PC-9 (cell line): ENCODE measurements at regions of chr15 and their contacts with region 1.

Region 1: DNA sequence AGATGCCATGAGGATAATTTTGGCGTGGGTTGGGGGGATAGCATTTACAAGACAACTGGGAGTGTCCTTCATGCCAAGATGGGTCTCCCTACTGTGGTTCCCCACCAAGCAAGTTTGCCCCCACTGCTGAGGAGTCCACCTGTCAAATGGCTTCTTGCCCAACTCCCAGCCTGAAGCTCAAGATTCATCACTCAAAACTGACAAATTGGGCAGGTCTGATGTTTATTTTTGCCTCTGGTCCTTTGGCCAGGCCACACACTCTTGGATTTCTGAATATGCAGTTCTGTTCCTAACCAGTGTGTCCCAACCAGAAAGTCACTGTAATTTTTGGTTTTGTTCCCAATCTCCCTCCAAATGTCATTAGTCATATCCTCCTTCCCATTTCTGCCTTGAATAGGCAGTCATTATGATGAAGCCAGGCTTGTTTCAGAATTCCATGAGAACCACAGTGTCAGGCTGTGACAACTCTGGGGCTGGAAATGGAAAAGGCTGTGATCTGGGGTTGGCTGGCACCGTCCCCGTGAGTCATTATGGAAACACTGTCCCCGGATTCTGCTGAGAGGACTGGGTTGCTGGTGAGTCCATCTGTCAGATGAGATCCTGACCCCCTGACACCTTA is 29.3 kb upstream of the MEF2A start:
- DNase-seq: peak; percentile 42 to 55
- H3K4me3 ChIP-seq: no peak overlapping the region
- H3K27ac ChIP-seq: peak overlapping the region; percentile 33
- H3K4me1 ChIP-seq: peaks cover 18% of the 10 kb centered on the region
- H3K27me3 ChIP-seq: no peaks in the 10 kb centered on the region
- CTCF ChIP-seq: no peak

Region 2: GRCh38 chr15:97745465-97746071 is 1791.0 kb before region 1 on chr15:
- CTCF ChIA-PET with region 1: interaction called, 10 read pairs
- POLR2A ChIA-PET with region 1: no interaction called
- intact Hi-C with region 1: no loop called
- DNase-seq: peak in 1 of 2 experiments; percentile 4
- H3K4me3 ChIP-seq: no peak overlapping the region
- H3K27ac ChIP-seq: no peak overlapping the region
- H3K4me1 ChIP-seq: no peaks in the 10 kb centered on the region
- H3K27me3 ChIP-seq: peaks cover 28% of the 10 kb centered on the region
- CTCF ChIP-seq: peak; percentile 78

Region 3: DNA sequence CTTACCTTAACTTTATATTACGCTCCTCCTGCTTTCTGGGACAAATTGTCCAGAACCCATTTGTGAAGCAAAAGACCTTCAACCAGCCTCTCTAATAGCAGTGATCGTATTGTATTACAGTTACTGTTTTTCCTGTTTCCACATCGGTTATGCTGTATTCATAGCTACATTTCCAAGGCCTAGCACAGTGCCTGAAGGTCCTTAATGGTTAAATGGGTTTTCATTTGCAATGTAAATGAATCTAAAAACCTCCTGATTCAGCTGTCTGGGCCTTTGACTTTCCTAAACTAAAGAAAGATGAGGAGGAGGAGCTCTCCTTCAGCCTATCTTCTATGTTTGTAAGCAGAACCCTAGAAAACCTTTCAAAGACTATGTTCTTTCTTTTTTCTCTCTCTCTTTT is 186.1 kb before region 1 on chr15:
- CTCF ChIA-PET with region 1: no interaction called
- POLR2A ChIA-PET with region 1: interaction called, 21 read pairs
- intact Hi-C with region 1: no loop called
- DNase-seq: no peak
- H3K4me3 ChIP-seq: no peak overlapping the region
- H3K27ac ChIP-seq: no peak overlapping the region
- H3K4me1 ChIP-seq: no peaks in the 10 kb centered on the region
- H3K27me3 ChIP-seq: no peaks in the 10 kb centered on the region
- CTCF ChIP-seq: no peak

Region 4: DNA sequence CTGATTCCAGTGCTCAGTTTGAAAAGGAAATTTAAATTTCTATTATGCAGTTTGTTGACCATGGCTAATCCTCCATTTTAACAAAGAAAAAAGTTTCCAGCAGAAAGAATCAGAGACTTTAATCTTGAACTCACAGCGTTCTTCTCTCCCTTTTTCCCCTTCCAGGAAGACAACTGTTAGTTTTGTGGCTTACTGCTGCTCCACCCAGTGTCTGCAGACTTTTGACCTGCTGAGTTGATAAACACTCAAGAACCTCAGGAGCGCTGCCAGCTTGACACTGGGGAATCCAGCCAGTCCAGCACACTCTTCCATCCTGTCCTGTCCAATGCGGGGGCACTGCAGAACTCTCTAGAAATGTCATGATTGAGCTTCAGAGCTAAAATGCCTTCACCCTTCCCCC is 150.7 kb before region 1 on chr15:
- CTCF ChIA-PET with region 1: no interaction called
- POLR2A ChIA-PET with region 1: no interaction called
- intact Hi-C with region 1: no loop called
- DNase-seq: peak in 1 of 2 experiments; percentile 35
- H3K4me3 ChIP-seq: no peak overlapping the region
- H3K27ac ChIP-seq: no peak overlapping the region
- H3K4me1 ChIP-seq: peaks cover 15% of the 10 kb centered on the region
- H3K27me3 ChIP-seq: no peaks in the 10 kb centered on the region
- CTCF ChIP-seq: no peak

Region 5: DNA sequence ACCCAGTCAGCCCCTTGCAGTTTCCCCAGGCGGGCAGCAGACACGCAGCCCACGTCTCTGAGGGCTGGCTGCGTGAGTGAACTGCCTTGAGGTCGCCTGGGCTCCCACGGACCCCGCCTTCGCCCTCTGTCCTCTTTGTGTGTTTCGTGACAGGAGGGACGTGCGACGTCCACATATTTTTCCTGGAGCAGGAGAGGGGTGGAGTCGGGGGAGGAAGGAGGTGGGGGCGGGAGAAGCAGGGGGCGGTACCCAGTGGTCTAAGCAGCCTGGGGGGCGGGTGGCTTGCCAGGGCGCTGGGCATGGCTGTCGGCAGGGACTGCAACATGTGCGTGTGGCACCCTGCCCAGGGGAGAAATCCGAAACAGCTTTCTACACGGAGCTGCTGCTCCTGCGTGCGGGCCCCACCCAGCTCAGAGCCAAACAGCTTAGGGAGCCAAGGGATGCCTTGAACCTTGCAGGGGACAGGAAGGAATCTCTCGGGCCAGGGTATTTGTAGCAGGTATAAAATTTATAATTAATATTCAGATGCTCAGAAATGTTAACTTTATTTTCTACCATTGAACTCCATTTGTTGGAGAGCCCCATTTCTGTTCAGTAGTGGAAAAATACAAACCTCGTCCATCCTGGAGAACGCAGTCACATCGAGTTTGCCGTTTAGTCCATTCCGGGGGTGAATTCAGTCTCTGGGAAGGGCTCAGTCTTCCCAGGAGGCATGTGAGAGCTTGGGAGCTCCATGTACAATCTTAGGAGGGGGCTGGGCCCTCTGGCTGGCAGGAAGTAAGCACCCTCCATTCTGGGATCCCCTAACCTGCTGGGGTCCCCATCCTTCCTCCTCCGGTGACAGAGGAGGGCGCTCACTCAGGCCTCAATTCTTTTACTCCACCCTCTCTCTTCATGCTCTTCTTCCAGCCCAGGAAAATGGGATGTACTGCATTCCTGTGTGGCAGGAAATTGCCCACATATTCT is 49.9 kb before region 1 on chr15:
- CTCF ChIA-PET with region 1: no interaction called
- POLR2A ChIA-PET with region 1: no interaction called
- intact Hi-C with region 1: no loop called
- DNase-seq: peak; percentile 52 to 78
- H3K4me3 ChIP-seq: peak overlapping the region; percentile 46; the same call in 1 of the 2 replicates
- H3K27ac ChIP-seq: no peak overlapping the region
- H3K4me1 ChIP-seq: peaks cover 9% of the 10 kb centered on the region; the same call in 1 of the 2 replicates
- H3K27me3 ChIP-seq: no peaks in the 10 kb centered on the region
- CTCF ChIP-seq: no peak